SK-N-SH (cell line): ENCODE measurements at regions of chr11 and their contacts with region 1.

Region 1: GRCh38 chr11:10808553-10809372 is at the start of gene EIF4G2:
- DNase-seq: peak; percentile 97
- H3K4me3 ChIP-seq: peak within 1 kb of the TSS; percentile 75 to 93
- H3K27ac ChIP-seq: peak within 1 kb of the TSS; percentile 95 to 98
- H3K4me1 ChIP-seq: peaks cover 17 to 27% of the 10 kb centered on the region in 2 experiments
- H3K27me3 ChIP-seq: no peaks in the 10 kb centered on the region
- CTCF ChIP-seq: no peak
- EP300 ChIP-seq: no peak; a peak in 1 of 4 replicates
- RAD21 ChIP-seq: no peak; the same call in 1 of the 2 replicates
- polyA plus RNA-seq, gene EIF4G2: 298 and 394 TPM in 2 replicates

Region 2: GRCh38 chr11:10701982-10702381 is 106.8 kb before region 1 on chr11:
- CTCF ChIA-PET with region 1: no interaction called
- POLR2A ChIA-PET with region 1: no interaction called
- DNase-seq: no peak
- H3K4me3 ChIP-seq: no peak overlapping the region
- H3K27ac ChIP-seq: no peak overlapping the region
- H3K4me1 ChIP-seq: no peaks in the 10 kb centered on the region
- H3K27me3 ChIP-seq: no peaks in the 10 kb centered on the region; the same call in 1 of the 2 replicates
- CTCF ChIP-seq: no peak
- EP300 ChIP-seq: no peak
- RAD21 ChIP-seq: no peak

Region 3: DNA sequence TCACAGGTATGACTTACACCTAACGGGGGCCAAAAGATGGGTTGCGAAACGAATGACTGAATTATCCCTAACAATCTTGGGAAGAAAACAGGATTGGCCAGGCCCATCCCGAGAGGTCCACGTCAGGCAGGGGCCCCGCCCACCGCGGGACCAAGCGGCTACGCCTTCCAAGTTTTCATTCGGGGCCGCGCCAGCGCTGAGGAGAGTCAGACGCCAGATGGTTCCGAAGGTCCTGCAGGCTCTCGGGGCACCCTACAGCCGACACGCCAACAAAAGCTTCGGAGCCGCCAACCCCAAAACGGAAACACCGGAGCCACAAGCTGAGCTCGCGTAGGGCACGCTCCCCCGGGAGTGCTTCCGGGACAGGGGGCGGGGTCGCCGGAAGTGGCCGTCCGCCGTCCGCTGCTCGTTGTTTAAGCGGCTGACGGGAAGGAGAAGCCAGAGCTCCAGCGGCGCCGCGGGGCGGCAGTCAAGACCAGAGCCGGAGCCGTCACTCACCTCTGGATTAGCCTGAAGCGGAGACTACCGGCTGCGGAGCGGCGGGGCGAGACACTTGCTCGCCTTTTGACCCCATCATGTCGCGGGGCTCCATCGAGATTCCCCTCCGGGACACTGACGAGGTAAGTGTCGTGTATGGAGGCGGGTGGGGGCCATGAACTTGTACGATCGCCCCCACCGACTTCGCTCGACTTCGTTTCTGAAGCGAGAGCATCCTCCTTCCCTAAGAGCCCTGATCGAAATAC is 57.8 kb before region 1 on chr11 and contains the start of gene CTR9:
- CTCF ChIA-PET with region 1: no interaction called
- POLR2A ChIA-PET with region 1: interaction called, 18 read pairs
- DNase-seq: peak; percentile 89
- H3K4me3 ChIP-seq: peak within 1 kb of the TSS; percentile 76 to 98
- H3K27ac ChIP-seq: peak within 1 kb of the TSS; percentile 94 to 99
- H3K4me1 ChIP-seq: peaks cover 0 to 10% of the 10 kb centered on the region in 2 experiments; a peak in 2 of 4 replicates
- H3K27me3 ChIP-seq: no peaks in the 10 kb centered on the region
- CTCF ChIP-seq: peak; percentile 29; the same call in 1 of the 2 replicates
- EP300 ChIP-seq: peak in 1 of 2 experiments; percentile 30; a peak in 1 of 4 replicates
- RAD21 ChIP-seq: peak; percentile 47
- polyA plus RNA-seq, gene CTR9: 10.1 and 13.0 TPM in 2 replicates

Region 4: DNA sequence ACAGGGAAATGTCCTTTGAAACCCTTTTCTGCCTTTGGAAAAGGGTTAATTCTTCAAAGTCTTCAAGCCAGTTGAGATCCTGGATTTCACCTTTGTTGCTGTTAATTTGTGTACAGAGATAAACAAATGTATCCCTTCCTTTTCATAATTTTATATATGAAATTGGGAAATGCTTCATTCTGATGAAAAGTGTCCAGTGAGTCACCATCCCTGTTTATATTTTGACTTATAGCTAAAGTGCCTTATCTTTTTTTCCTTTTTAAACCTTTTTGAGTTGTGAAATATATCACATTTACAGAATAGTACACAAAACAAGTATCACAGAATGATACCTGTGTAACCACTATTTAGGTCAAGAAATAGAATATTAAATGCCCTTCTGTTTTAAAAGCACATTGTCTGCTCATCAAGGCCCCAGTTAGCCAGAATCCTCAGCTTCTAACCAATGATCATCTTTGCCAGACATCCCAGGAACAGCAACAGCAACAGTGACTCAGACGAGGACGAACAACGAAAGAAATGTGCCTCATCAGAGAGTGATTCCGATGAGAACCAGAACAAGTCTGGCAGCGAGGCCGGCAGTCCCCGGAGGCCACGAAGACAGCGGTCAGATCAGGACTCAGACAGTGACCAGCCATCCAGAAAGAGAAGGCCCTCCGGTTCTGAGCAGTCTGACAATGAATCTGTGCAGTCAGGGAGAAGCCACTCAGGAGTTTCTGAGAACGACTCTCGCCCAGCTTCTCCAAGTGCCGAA is 30.4 kb before region 1 on chr11:
- CTCF ChIA-PET with region 1: interaction called, 9 read pairs
- POLR2A ChIA-PET with region 1: interaction called, 11 read pairs
- DNase-seq: peak; percentile 78
- H3K4me3 ChIP-seq: no peak overlapping the region
- H3K27ac ChIP-seq: peak overlapping the region; percentile 95 to 98
- H3K4me1 ChIP-seq: peaks cover 13 to 23% of the 10 kb centered on the region in 2 experiments; a peak in 3 of 4 replicates
- H3K27me3 ChIP-seq: no peaks in the 10 kb centered on the region
- CTCF ChIP-seq: no peak
- EP300 ChIP-seq: peak; percentile 27 to 83; a peak in 3 of 4 replicates
- RAD21 ChIP-seq: no peak

Region 5: GRCh38 chr11:10797531-10797930 is 11.2 kb before region 1 on chr11:
- CTCF ChIA-PET with region 1: interaction called, 57 read pairs
- POLR2A ChIA-PET with region 1: interaction called, 30 read pairs
- DNase-seq: no peak
- H3K4me3 ChIP-seq: no peak overlapping the region
- H3K27ac ChIP-seq: peak overlapping the region in 1 of 2 experiments; percentile 16; a peak in 1 of 4 replicates
- H3K4me1 ChIP-seq: peaks cover 0 to 3% of the 10 kb centered on the region in 2 experiments; a peak in 2 of 4 replicates
- H3K27me3 ChIP-seq: no peaks in the 10 kb centered on the region
- CTCF ChIP-seq: no peak
- EP300 ChIP-seq: no peak
- RAD21 ChIP-seq: no peak

Region 6: GRCh38 chr11:10857709-10858438 is 49.1 kb after region 1 on chr11 and contains the start of gene ZBED5:
- CTCF ChIA-PET with region 1: interaction called, 3 read pairs
- POLR2A ChIA-PET with region 1: interaction called, 84 read pairs
- DNase-seq: peak; percentile 92
- H3K4me3 ChIP-seq: peak within 1 kb of the TSS; percentile 77 to 99
- H3K27ac ChIP-seq: peak within 1 kb of the TSS; percentile 97 to 100
- H3K4me1 ChIP-seq: peaks cover 0 to 11% of the 10 kb centered on the region in 2 experiments; a peak in 2 of 4 replicates
- H3K27me3 ChIP-seq: no peaks in the 10 kb centered on the region
- CTCF ChIP-seq: peak; percentile 24; the same call in 1 of the 2 replicates
- EP300 ChIP-seq: no peak; a peak in 1 of 4 replicates
- RAD21 ChIP-seq: no peak
- polyA plus RNA-seq, gene ZBED5: 23.5 and 31.2 TPM in 2 replicates

Region 7: GRCh38 chr11:11057472-11057854 is 248.7 kb after region 1 on chr11:
- CTCF ChIA-PET with region 1: no interaction called
- POLR2A ChIA-PET with region 1: no interaction called
- DNase-seq: no peak
- H3K4me3 ChIP-seq: no peak overlapping the region
- H3K27ac ChIP-seq: no peak overlapping the region
- H3K4me1 ChIP-seq: no peaks in the 10 kb centered on the region
- H3K27me3 ChIP-seq: no peaks in the 10 kb centered on the region
- CTCF ChIP-seq: no peak
- EP300 ChIP-seq: no peak
- RAD21 ChIP-seq: no peak